HEK293 (cell line): ENCODE measurements at regions of chr1 and their contacts with region 1.

Region 1: DNA sequence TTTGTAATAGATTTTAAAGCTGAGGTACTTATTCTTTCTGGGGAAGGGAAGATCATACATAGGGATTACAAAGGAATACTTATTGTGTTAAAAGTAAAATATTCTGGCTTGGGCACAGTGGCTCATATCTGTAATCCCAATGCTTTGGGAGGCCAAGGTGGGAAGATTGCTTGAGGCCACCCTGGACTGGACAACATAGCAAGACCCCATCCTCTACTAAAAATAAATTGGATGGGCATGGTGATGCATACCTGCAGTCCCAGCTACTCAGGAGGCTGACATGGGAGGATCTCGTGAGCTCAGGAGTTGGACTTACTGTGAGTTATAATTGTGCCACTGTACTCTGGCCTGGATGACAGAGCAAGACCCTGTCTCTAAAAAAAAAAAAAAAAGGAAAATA is 27.6 kb downstream of the GABPB2 start:
- H3K4me3 ChIP-seq: no peak overlapping the region
- H3K27ac ChIP-seq: no peak overlapping the region
- H3K4me1 ChIP-seq: no peaks in the 10 kb centered on the region
- CTCF ChIP-seq: no peak

Region 2: GRCh38 chr1:150420560-150421265 is 677.4 kb before region 1 on chr1:
- CTCF ChIA-PET with region 1: no interaction called
- POLR2A ChIA-PET with region 1: no interaction called
- H3K4me3 ChIP-seq: no peak overlapping the region
- H3K27ac ChIP-seq: no peak overlapping the region
- H3K4me1 ChIP-seq: no peaks in the 10 kb centered on the region
- CTCF ChIP-seq: no peak

Region 3: DNA sequence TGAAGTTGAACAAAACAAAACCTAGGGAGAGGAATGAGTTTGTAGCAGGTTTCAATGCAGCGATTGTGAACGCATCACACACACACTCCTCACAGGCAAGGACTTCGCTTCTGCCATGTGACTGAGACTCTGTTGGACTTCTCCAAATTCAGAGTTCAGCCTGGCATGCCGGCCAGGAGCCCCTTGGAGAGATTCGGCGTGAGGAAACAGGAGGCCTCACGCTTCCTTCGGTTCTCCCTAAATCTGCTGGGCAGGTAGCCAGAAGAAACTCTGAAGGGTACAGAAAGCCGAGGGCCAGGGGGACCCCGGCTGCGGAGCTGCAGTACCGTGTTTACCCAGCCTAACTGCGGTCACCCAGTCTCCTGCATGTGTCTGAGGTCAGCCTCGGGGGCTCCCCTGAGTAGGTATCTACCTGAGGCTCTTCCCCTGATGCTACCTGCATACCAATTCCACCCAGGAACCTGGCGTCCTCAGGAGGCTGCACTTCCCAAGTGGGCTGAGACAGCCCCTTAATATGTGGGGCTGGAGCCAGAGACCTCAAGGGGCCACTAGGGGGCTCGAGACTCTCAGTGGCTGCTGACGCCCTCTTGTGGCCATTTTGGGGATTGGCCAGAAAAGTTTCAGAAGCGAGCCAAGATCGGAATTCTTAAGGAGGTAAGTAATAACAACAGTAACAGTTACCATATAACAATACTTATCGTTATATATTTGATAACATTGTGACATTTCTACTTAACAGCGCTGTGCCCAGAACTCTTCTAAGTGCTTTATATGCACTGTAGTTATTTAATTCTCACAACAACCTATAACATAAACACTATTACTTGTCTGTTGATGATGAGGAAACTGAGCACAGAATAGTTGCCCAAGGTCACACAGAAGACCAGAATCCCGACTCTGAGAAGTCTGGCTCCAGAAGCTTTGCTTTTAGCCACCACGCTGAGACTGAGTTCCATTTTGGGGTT is 118.8 kb before region 1 on chr1:
- CTCF ChIA-PET with region 1: no interaction called
- POLR2A ChIA-PET with region 1: no interaction called
- H3K4me3 ChIP-seq: no peak overlapping the region
- H3K27ac ChIP-seq: no peak overlapping the region
- H3K4me1 ChIP-seq: peaks cover 7% of the 10 kb centered on the region; the same call in 1 of the 2 replicates
- CTCF ChIP-seq: peak; percentile 97

Region 4: DNA sequence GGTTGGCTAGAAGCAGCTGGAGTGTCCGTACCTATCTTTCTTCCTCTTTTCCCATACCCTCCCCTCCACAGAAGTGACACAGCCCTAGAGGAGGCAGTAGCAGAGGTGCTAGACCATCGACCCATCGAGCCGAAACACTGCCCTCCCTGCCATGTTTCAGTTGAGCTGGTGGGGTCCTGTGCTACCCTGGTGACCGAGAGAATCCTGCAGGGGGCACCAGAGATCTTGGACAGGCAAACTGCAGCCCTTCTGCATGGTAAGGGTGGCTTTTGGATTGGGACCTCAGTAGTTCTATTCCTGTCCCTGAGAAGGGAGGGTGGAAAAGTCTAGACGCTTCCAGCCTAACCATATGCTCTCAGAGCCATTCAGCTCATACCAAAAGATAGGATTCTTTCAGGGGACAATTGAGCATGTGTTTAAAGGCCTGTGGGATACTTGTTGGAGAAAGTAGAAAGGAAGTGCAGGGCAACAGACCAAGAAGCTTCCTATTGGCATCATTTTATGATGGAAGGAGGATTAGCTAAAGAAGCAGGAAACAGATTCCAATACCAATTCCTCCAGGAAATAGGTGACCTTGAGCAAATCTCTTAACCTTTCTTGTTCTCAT is 73.5 kb before region 1 on chr1:
- CTCF ChIA-PET with region 1: interaction called, 13 read pairs
- POLR2A ChIA-PET with region 1: no interaction called
- H3K4me3 ChIP-seq: no peak overlapping the region
- H3K27ac ChIP-seq: no peak overlapping the region
- H3K4me1 ChIP-seq: no peaks in the 10 kb centered on the region
- CTCF ChIP-seq: peak; percentile 66

Region 5: GRCh38 chr1:151085953-151086559 is 12.1 kb before region 1 on chr1:
- CTCF ChIA-PET with region 1: interaction called, 16 read pairs
- POLR2A ChIA-PET with region 1: interaction called, 5 read pairs
- H3K4me3 ChIP-seq: no peak overlapping the region
- H3K27ac ChIP-seq: no peak overlapping the region
- H3K4me1 ChIP-seq: no peaks in the 10 kb centered on the region
- CTCF ChIP-seq: no peak

Region 6: DNA sequence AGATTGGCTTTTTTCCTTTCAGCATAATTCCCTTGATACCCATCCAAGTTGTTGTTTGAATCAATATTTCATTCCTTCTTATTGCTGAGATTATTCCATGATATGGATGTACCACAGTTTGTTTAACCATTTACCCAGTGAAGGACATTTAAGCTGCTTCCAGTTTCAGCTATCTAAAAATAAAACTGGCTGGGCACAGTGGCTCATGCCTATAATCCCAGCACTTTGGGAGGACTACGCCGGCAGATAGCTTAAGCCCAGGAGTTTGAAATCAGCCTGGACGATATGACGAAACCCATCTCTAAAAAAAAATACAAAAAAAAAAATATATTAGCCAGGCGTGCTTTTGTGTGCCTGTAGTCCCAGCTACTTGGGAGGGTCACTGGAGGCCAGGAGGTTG is 15.8 kb after region 1 on chr1:
- CTCF ChIA-PET with region 1: interaction called, 19 read pairs
- POLR2A ChIA-PET with region 1: interaction called, 3 read pairs
- H3K4me3 ChIP-seq: no peak overlapping the region
- H3K27ac ChIP-seq: no peak overlapping the region
- H3K4me1 ChIP-seq: no peaks in the 10 kb centered on the region
- CTCF ChIP-seq: no peak

Region 7: DNA sequence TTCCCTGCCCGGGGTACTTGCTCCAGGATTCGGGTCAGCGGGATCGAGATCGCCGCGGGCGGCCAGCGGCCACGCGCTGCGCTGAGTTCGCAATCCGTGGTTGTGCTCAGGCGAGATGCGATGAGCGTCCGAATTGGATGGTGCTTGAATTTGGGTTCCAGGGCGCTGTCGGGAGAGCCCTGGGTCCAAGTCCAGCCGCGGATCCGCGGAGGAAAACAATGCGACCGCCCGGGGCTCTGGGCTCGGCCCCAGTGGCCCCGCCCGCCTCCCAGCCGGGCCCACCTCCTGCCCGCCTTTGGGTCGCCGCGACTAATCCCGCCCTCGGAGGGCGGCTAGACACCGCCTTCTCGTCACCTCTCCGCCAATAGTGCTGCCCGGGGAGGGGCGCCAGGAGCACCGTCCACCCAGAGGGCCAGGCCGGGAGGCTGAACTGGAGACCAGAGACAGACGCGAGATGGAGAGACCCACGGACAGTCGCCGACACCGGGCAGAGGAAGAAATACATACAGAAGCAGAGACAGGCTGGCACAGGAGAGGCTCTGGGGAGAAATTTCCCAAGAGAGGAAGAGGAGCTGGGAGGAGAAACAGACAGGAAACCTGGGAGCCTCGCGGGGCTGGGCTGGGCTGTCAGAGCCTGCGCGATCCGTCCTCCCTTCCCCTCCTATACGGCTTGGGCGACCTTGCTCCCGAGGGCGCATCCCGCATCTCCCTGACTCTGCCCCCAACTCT is 48.5 kb after region 1 on chr1 and contains the start of gene SEMA6C:
- CTCF ChIA-PET with region 1: interaction called, 12 read pairs
- POLR2A ChIA-PET with region 1: no interaction called
- H3K4me3 ChIP-seq: peak within 1 kb of the TSS; percentile 65
- H3K27ac ChIP-seq: no peak within 1 kb of the TSS; the same call in 1 of the 2 replicates
- H3K4me1 ChIP-seq: peaks cover 3% of the 10 kb centered on the region; the same call in 1 of the 2 replicates
- CTCF ChIP-seq: no peak

Region 8: GRCh38 chr1:151156515-151156819 is 58.3 kb after region 1 on chr1 and contains the start of gene TNFAIP8L2:
- CTCF ChIA-PET with region 1: interaction called, 124 read pairs
- POLR2A ChIA-PET with region 1: interaction called, 3 read pairs
- H3K4me3 ChIP-seq: no peak within 1 kb of the TSS
- H3K27ac ChIP-seq: no peak within 1 kb of the TSS
- H3K4me1 ChIP-seq: no peaks in the 10 kb centered on the region
- CTCF ChIP-seq: no peak